ENCODE measurements at regions of chr7 and their contacts with region 1.

Region 1: GRCh38 chr7:105652359-105652993 is 71.2 kb upstream of the EFCAB10 start:
- DNase-seq: peak; percentile 26
- ATAC-seq: peak; percentile 91
- H3K4me3 ChIP-seq: no peak overlapping the region
- H3K27ac ChIP-seq: no peak overlapping the region
- H3K4me1 ChIP-seq: peaks cover 21 to 30% of the 10 kb centered on the region in 2 experiments
- H3K27me3 ChIP-seq: no peaks in the 10 kb centered on the region
- CTCF ChIP-seq: peak; percentile 65 to 88 (median 79); a peak in 5 of 6 replicates
- POLR2A ChIP-seq: no peak
- RAD21 ChIP-seq: peak; percentile 87

Region 2: GRCh38 chr7:105487579-105488571 is 164.6 kb before region 1 on chr7:
- CTCF ChIA-PET with region 1: no interaction called
- POLR2A ChIA-PET with region 1: no interaction called
- RAD21 ChIA-PET with region 1: no interaction called
- intact Hi-C with region 1: no loop called
- DNase-seq: no peak
- ATAC-seq: peak; percentile 64; the same call in 1 of the 2 replicates
- H3K4me3 ChIP-seq: no peak overlapping the region
- H3K27ac ChIP-seq: no peak overlapping the region
- H3K4me1 ChIP-seq: no peaks in the 10 kb centered on the region
- H3K27me3 ChIP-seq: no peaks in the 10 kb centered on the region
- CTCF ChIP-seq: peak; percentile 16 to 39 (median 31); a peak in 3 of 6 replicates
- POLR2A ChIP-seq: no peak
- RAD21 ChIP-seq: peak; percentile 59

Region 3: DNA sequence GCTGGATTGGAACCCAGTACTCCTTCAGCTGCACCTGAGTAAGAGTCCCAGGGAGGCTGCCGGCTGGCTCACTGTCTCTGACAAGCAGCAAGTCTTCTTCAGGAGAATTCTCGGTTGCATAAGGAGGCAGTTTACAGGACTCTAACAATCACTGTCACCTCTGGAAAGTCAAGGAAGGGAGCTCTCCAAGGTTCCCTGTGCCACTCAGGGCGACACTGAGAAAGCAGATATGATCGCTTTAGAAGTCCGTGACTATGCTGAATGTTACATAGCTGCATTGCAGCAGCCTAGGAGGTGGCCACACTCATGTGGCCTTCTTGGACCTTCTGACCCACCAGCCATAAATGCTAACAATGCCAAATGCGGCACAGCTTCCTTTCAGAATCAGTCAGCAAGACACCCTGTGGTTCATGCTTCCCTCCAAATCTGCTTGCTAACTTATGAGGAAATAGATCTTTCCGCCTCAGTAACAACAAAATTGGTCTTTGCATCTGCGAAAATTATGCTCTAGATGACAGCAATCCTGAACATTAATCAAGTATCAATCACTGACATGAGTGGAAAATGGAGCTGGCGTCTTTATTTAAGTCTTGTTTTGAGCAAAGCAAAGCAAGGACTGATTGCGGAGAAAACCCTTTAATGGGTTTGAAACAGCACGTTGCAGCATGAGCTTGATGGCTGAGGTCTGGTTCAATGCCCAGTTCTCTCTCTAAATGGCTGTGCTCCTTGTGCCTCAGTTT is 91.0 kb after region 1 on chr7:
- CTCF ChIA-PET with region 1: interaction called, 3 read pairs
- POLR2A ChIA-PET with region 1: no interaction called
- RAD21 ChIA-PET with region 1: no interaction called
- intact Hi-C with region 1: loop called (anchors 1 kb)
- DNase-seq: no peak
- ATAC-seq: no peak
- H3K4me3 ChIP-seq: no peak overlapping the region
- H3K27ac ChIP-seq: no peak overlapping the region
- H3K4me1 ChIP-seq: no peaks in the 10 kb centered on the region
- H3K27me3 ChIP-seq: no peaks in the 10 kb centered on the region
- CTCF ChIP-seq: no peak
- POLR2A ChIP-seq: no peak
- RAD21 ChIP-seq: no peak

Region 4: GRCh38 chr7:105876091-105876963 is 223.9 kb after region 1 on chr7 and contains the start of gene ATXN7L1:
- CTCF ChIA-PET with region 1: no interaction called
- POLR2A ChIA-PET with region 1: no interaction called
- RAD21 ChIA-PET with region 1: no interaction called
- intact Hi-C with region 1: loop called (anchors 10 kb)
- DNase-seq: peak; percentile 95
- ATAC-seq: peak; percentile 89
- H3K4me3 ChIP-seq: peak within 1 kb of the TSS; percentile 87 to 92
- H3K27ac ChIP-seq: peak within 1 kb of the TSS; percentile 76
- H3K4me1 ChIP-seq: peaks cover 11 to 36% of the 10 kb centered on the region in 2 experiments
- H3K27me3 ChIP-seq: no peaks in the 10 kb centered on the region
- CTCF ChIP-seq: peak in 1 of 3 experiments; percentile 33; a peak in 1 of 6 replicates
- POLR2A ChIP-seq: peak; percentile 86
- RAD21 ChIP-seq: no peak
- total RNA-seq, gene ATXN7L1: 11.5 TPM

Region 5: DNA sequence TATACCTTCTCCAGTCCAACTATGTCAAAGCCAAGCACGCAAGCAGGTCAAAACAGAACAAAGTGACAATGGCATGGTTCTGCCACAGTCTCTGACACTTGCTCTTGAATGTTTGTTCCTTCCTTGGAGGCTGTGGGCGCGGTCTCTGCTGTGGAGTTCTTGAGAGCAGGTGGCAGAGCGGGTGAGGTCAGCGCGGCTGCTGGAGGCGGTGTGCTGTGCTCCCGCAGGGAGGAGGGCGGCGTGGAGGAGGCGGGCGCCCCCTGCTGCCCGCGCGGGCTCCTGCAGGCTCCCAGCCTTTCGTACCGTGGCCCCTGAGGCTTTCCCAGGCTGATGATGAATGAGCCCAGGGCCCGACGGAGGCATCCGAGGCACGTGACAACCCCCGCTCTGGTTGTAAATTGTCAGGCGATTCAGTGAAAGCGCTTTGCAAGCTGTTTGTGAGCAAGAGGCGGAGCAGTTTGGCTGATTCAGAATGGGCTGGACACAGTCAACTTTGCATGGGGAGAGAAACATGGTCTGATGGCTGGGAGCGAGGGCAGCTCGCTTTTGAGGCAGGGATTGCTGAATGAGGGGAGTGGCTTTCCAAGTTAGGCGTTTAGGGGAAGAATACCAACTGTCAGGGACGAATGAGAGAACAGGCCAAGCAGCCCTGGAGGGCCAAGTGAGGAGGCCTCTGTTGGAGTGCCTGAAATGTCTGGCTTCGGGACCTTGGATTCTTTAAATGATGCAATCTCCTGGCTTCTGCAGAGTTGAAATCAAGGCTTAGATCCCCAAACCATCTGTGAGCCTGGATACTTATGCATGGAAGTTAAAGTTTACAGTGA is 357.1 kb after region 1 on chr7:
- CTCF ChIA-PET with region 1: interaction called, 3 read pairs
- POLR2A ChIA-PET with region 1: no interaction called
- RAD21 ChIA-PET with region 1: no interaction called
- intact Hi-C with region 1: loop called (anchors 1 kb)
- DNase-seq: peak; percentile 63
- ATAC-seq: peak; percentile 99
- H3K4me3 ChIP-seq: peak overlapping the region in 1 of 2 experiments; percentile 19; a peak in 2 of 4 replicates
- H3K27ac ChIP-seq: no peak overlapping the region
- H3K4me1 ChIP-seq: peaks cover 8 to 12% of the 10 kb centered on the region in 2 experiments; a peak in 3 of 4 replicates
- H3K27me3 ChIP-seq: no peaks in the 10 kb centered on the region
- CTCF ChIP-seq: peak; percentile 96 to 98 (median 97)
- POLR2A ChIP-seq: no peak
- RAD21 ChIP-seq: peak; percentile 98

Region 6: GRCh38 chr7:106041140-106041717 is 388.8 kb after region 1 on chr7:
- CTCF ChIA-PET with region 1: interaction called, 8 read pairs
- POLR2A ChIA-PET with region 1: no interaction called
- RAD21 ChIA-PET with region 1: no interaction called
- intact Hi-C with region 1: loop called (anchors 1 kb)
- DNase-seq: peak; percentile 47
- ATAC-seq: peak; percentile 81
- H3K4me3 ChIP-seq: no peak overlapping the region
- H3K27ac ChIP-seq: no peak overlapping the region
- H3K4me1 ChIP-seq: peaks cover 0 to 12% of the 10 kb centered on the region in 2 experiments; a peak in 2 of 4 replicates
- H3K27me3 ChIP-seq: no peaks in the 10 kb centered on the region
- CTCF ChIP-seq: peak; percentile 67 to 94 (median 88); a peak in 5 of 6 replicates
- POLR2A ChIP-seq: no peak
- RAD21 ChIP-seq: peak; percentile 51

Region 7: GRCh38 chr7:106112117-106112971 is 459.9 kb after region 1 on chr7 and contains the start of gene SYPL1:
- CTCF ChIA-PET with region 1: no interaction called
- POLR2A ChIA-PET with region 1: no interaction called
- RAD21 ChIA-PET with region 1: no interaction called
- intact Hi-C with region 1: no loop called
- DNase-seq: peak; percentile 77
- ATAC-seq: peak; percentile 88
- H3K4me3 ChIP-seq: peak within 1 kb of the TSS; percentile 65 to 76
- H3K27ac ChIP-seq: peak within 1 kb of the TSS; percentile 97
- H3K4me1 ChIP-seq: peaks cover 4 to 23% of the 10 kb centered on the region in 2 experiments; a peak in 3 of 4 replicates
- H3K27me3 ChIP-seq: no peaks in the 10 kb centered on the region
- CTCF ChIP-seq: no peak
- POLR2A ChIP-seq: no peak
- RAD21 ChIP-seq: no peak
- total RNA-seq, gene SYPL1: 78.0 TPM

Region 8: DNA sequence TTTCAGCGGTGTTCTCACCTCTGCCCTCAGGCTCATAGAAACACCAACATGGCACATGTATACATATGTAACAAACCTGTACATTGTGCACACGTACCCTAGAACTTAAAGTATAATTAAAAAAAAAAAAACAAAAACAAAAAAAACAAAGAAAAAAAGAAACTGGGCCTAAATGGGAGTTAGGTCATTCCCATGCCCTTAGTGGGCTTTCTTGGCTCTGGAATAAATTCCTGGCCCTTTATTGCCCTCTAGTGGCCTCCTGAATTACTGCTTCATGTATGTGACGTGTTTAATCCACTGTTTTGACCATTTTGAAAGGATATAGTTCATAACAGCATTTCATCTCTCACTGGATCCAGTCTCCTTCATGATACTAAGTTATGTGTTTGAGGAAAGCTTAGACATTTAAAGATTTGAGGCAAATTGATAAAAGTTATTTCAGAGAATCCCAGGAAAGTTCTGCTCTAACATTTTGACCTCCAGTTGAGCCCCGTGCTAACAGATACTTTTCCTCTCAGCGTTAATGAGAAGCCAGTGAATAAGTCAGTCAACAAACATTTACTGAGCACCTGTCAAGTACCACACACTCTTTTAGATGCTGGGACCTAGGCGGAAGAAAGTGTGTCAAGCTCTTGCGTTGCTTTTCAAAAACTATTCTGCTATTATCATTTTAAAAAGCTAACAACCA is 514.3 kb after region 1 on chr7:
- CTCF ChIA-PET with region 1: no interaction called
- POLR2A ChIA-PET with region 1: no interaction called
- RAD21 ChIA-PET with region 1: no interaction called
- intact Hi-C with region 1: loop called (anchors 5 kb)
- DNase-seq: peak; percentile 68
- ATAC-seq: peak; percentile 84
- H3K4me3 ChIP-seq: no peak overlapping the region
- H3K27ac ChIP-seq: no peak overlapping the region
- H3K4me1 ChIP-seq: no peaks in the 10 kb centered on the region
- H3K27me3 ChIP-seq: no peaks in the 10 kb centered on the region
- CTCF ChIP-seq: peak; percentile 67 to 79 (median 68)
- POLR2A ChIP-seq: no peak
- RAD21 ChIP-seq: peak; percentile 83